CD4-positive, alpha-beta T cell (primary cell): ENCODE measurements at regions of chr15 and their contacts with region 1.

Region 1: DNA sequence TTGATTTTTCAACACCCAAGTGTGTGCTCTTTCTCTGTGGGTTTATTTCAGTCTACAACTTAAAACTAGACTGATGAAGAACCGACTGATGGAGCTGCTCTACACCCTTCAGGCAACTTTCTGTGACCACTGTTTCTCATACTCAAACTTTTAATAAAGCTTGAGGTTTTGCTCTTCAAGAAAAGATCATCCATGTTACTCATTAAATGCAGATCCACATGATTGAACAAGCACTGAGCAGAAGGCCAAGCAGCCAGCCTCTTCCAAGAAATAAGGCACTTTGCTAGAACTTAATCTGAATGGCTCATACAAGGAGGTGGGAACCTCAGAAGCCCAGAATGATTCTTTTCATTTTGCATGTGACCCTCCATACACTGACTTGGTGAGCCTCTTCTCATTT is 8.7 kb downstream of the SLC27A2 start:
- DNase-seq: no peak
- ATAC-seq: no peak
- H3K4me3 ChIP-seq: no peak overlapping the region
- H3K4me3 Mint-ChIP-seq: no peak overlapping the region
- H3K27ac ChIP-seq: no peak overlapping the region
- H3K27ac Mint-ChIP-seq: no peak overlapping the region
- H3K4me1 ChIP-seq: no peaks in the 10 kb centered on the region
- H3K4me1 Mint-ChIP-seq: no peaks in the 10 kb centered on the region
- H3K27me3 ChIP-seq: no peaks in the 10 kb centered on the region
- H3K27me3 Mint-ChIP-seq: peaks cover 7% of the 10 kb centered on the region
- CTCF ChIP-seq: no peak

Region 2: DNA sequence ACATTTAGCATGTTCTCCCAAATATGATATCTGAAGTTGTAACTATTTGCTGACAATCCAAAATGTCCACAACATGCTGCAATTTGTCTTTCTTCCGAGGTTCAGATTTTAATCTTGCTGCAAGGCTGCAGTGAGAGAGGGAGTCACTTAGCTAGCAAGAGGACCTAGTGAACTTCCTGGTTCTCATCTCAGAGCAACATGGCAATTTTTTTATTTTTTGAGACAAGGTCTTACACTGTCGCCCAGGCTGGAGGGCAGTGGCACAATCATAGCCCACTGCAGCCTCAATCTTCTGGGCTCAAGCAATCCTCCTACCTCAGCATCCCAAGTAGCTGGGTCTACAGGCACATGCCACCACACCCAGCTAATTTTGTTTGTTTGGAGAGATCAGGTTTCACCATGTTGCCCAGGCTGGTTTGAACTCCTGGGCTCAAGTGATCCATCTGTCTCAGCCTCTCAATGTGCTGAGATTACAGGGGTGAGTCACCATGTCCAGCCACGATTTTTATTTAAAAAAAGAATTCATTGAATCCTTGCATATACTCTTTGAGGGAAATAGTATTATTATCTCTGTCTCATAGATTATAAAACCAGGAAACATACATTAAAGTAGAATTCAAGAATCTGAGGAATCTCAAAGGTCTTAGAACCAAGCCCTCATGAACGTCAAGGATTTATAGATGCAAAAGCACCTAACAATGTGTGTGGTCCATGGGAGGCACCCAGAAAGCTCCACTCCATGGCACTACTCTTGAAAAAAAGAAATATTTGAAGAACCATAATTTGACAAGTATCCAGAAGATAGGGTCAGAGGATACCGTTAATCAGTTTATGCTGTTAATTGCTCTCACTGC is 65.7 kb after region 1 on chr15:
- CTCF ChIA-PET with region 1: no interaction called
- POLR2A ChIA-PET with region 1: no interaction called
- intact Hi-C with region 1: loop called in 1 of 2 experiments (anchors 10 kb)
- DNase-seq: no peak
- ATAC-seq: no peak
- H3K4me3 ChIP-seq: no peak overlapping the region
- H3K4me3 Mint-ChIP-seq: no peak overlapping the region
- H3K27ac ChIP-seq: no peak overlapping the region
- H3K27ac Mint-ChIP-seq: no peak overlapping the region
- H3K4me1 ChIP-seq: peaks cover 9% of the 10 kb centered on the region
- H3K4me1 Mint-ChIP-seq: peaks cover 13% of the 10 kb centered on the region
- H3K27me3 ChIP-seq: no peaks in the 10 kb centered on the region
- H3K27me3 Mint-ChIP-seq: no peaks in the 10 kb centered on the region
- CTCF ChIP-seq: no peak

Region 3: DNA sequence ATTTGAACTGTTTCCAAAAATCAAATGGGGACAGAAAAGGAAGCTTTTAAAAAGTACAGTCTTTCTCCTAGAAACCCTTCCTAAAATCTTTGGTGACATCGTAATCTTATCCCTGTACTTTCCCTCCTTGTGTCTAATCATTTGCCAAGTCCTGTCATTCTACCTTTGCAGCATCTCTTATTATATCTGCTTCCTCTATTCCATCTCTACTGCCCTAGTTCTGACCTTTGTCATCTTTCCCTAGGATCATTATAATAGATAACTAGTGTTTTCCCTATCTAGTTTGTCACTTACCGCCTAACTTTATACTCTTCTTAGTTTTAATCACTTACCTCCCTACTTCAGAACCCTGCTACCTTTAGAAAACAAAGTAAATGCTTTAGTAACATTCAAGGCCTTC is 245.0 kb after region 1 on chr15:
- CTCF ChIA-PET with region 1: no interaction called
- POLR2A ChIA-PET with region 1: no interaction called
- intact Hi-C with region 1: no loop called
- DNase-seq: no peak
- ATAC-seq: no peak
- H3K4me3 ChIP-seq: no peak overlapping the region
- H3K4me3 Mint-ChIP-seq: no peak overlapping the region
- H3K27ac ChIP-seq: no peak overlapping the region
- H3K27ac Mint-ChIP-seq: peak overlapping the region; percentile 0
- H3K4me1 ChIP-seq: no peaks in the 10 kb centered on the region
- H3K4me1 Mint-ChIP-seq: peaks cover 46% of the 10 kb centered on the region
- H3K27me3 ChIP-seq: no peaks in the 10 kb centered on the region
- H3K27me3 Mint-ChIP-seq: no peaks in the 10 kb centered on the region
- CTCF ChIP-seq: no peak